OCI-LY7 (cell line): ENCODE measurements at regions of chr3 and their contacts with region 1.

Region 1: GRCh38 chr3:185929192-185930151 is 8.3 kb downstream of the TRA2B start:
- DNase-seq: no peak
- H3K4me3 ChIP-seq: peak overlapping the region; percentile 92
- H3K27ac ChIP-seq: peak overlapping the region; percentile 26
- H3K4me1 ChIP-seq: peaks cover 77% of the 10 kb centered on the region
- CTCF ChIP-seq: no peak

Region 2: GRCh38 chr3:184811999-184812661 is 1117.3 kb before region 1 on chr3 and contains the start of gene VPS8:
- CTCF ChIA-PET with region 1: no interaction called
- POLR2A ChIA-PET with region 1: no interaction called
- intact Hi-C with region 1: loop called (anchors 5 kb)
- DNase-seq: peak; percentile 97
- H3K4me3 ChIP-seq: peak within 1 kb of the TSS; percentile 89
- H3K27ac ChIP-seq: peak within 1 kb of the TSS; percentile 23
- H3K4me1 ChIP-seq: peaks cover 27% of the 10 kb centered on the region
- CTCF ChIP-seq: 0 out of 2 replicates have a peak, but pooled peaks have one; percentile 50
- total RNA-seq, gene VPS8: 33.5 and 38.6 TPM in 2 replicates

Region 3: GRCh38 chr3:184981071-184981470 is 948.4 kb before region 1 on chr3:
- CTCF ChIA-PET with region 1: no interaction called
- POLR2A ChIA-PET with region 1: no interaction called
- intact Hi-C with region 1: no loop called
- DNase-seq: no peak
- H3K4me3 ChIP-seq: no peak overlapping the region
- H3K27ac ChIP-seq: no peak overlapping the region
- H3K4me1 ChIP-seq: no peaks in the 10 kb centered on the region
- CTCF ChIP-seq: no peak

Region 4: DNA sequence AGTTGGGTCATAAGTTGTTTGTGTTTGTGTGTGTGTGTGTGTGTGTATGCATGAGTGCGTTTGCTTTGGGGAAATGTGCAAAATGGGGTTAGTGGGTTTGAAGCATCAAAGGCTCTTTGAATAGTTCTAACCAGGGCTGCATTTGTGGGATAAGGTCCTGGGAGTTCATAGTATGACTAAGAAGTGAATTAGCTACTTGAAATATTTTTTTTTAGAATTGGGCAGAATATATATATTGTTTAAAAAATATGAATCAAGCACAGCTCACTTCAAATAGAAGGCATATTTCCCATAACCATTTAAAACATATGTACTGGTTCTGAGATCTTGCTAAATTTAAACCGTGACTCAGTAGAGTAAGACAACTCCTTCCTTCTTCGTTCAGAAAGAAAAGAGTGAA is 147.7 kb before region 1 on chr3:
- CTCF ChIA-PET with region 1: no interaction called
- POLR2A ChIA-PET with region 1: no interaction called
- intact Hi-C with region 1: no loop called
- DNase-seq: no peak
- H3K4me3 ChIP-seq: no peak overlapping the region
- H3K27ac ChIP-seq: no peak overlapping the region
- H3K4me1 ChIP-seq: no peaks in the 10 kb centered on the region
- CTCF ChIP-seq: no peak

Region 5: GRCh38 chr3:185912929-185913901 is 16.3 kb before region 1 on chr3:
- CTCF ChIA-PET with region 1: interaction called, 3 read pairs
- POLR2A ChIA-PET with region 1: interaction called, 15 read pairs
- intact Hi-C with region 1: no loop called
- DNase-seq: no peak
- H3K4me3 ChIP-seq: no peak overlapping the region
- H3K27ac ChIP-seq: no peak overlapping the region
- H3K4me1 ChIP-seq: no peaks in the 10 kb centered on the region
- CTCF ChIP-seq: no peak

Region 6: GRCh38 chr3:185942907-185943759 is 13.7 kb after region 1 on chr3:
- CTCF ChIA-PET with region 1: interaction called, 7 read pairs
- POLR2A ChIA-PET with region 1: interaction called, 10 read pairs
- intact Hi-C with region 1: no loop called
- DNase-seq: peak; percentile 88
- H3K4me3 ChIP-seq: peak overlapping the region; percentile 33
- H3K27ac ChIP-seq: peak overlapping the region; percentile 16
- H3K4me1 ChIP-seq: peaks cover 20% of the 10 kb centered on the region
- CTCF ChIP-seq: peak; percentile 99